Activated CD8-positive, alpha-beta T cell treated with anti-CD3 and anti-CD28 coated beads for 36 hours (primary cell): ENCODE measurements at regions of chr6 and their contacts with region 1.

Region 1: DNA sequence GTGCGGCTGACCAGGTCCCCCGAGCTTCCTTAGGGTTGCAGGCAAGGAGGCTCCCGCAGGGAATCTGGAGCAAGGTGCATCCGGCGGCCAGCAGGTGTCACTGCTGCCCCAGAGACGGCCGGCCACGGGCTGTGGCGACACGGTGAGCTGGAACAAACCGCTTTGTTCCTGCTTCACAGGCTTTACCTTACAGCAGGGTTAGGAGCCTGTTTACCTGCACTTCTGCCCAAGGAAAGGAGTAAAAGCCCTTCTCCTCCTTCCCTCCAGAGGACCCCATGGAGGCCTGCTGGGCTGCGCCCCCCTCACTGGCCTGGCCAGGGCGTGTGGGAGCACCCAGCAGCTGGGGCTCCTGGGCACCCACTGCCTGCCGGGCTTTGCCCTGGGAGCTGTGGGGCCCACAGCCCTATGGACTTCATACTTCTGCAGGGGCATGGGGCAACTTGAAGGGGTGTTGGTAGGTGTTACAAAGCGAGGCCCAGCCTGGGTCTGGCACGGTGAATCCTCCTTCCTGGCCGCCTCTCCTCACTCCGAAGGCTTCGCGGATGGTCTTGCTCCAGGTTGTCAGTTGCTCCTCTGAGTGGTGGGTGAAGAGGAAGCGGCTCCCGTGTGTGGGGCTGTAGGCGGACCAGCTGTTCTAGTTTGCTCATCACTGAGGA is 88.4 kb downstream of the CDC5L start:
- DNase-seq: peak; percentile 77
- ATAC-seq: peak; percentile 92
- H3K4me3 Mint-ChIP-seq: no peak overlapping the region
- H3K27ac Mint-ChIP-seq: no peak overlapping the region
- H3K4me1 Mint-ChIP-seq: no peaks in the 10 kb centered on the region
- H3K27me3 Mint-ChIP-seq: no peaks in the 10 kb centered on the region
- CTCF ChIP-seq: peak; percentile 92

Region 2: DNA sequence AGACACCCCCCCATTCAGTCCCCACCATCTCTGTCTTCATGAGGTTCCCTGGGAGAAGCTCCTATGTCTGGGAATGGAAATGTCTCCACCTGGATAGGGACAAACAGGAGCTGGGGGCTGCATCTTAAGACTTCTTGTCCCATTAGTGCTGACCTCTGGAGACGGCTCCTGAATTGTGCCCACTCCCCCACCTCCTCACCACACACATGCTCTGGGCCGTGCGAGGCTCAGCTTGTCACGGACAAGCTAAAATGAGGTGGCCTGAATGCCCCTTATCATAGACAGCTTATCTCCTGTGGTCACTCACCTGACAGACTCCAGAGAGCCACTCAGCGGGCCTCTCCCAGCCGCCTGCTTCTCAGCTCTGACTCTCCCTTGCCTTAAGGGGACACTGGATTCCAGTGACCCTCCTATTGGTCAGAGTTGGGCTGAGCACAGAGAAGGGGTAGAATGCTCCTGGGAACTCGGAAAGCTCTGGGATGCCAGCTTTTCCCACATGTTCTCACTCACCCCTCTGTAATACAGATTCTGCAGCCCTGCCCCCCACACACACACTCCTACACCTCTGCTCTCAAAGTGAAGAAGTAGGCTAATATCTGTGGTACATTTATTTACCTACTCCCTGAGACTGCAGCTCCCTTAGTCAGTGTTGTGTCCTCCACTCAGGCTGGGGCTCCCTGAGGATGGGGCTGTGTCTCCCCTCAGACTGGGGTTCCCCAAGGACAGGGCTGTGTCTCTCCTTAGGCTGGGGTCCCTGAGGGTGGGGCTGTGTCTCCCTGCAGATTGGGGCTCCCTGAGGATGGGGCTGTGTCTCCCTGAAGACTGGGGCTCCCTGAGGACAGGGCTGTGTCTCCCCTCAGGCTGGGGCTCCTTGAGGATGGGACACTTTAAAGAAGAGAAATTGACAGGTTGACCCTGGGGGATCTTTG is 538.4 kb before region 1 on chr6:
- CTCF ChIA-PET with region 1: no interaction called
- POLR2A ChIA-PET with region 1: no interaction called
- intact Hi-C with region 1: no loop called
- DNase-seq: no peak
- ATAC-seq: no peak
- H3K4me3 Mint-ChIP-seq: no peak overlapping the region
- H3K27ac Mint-ChIP-seq: no peak overlapping the region
- H3K4me1 Mint-ChIP-seq: no peaks in the 10 kb centered on the region
- H3K27me3 Mint-ChIP-seq: no peaks in the 10 kb centered on the region
- CTCF ChIP-seq: no peak

Region 3: DNA sequence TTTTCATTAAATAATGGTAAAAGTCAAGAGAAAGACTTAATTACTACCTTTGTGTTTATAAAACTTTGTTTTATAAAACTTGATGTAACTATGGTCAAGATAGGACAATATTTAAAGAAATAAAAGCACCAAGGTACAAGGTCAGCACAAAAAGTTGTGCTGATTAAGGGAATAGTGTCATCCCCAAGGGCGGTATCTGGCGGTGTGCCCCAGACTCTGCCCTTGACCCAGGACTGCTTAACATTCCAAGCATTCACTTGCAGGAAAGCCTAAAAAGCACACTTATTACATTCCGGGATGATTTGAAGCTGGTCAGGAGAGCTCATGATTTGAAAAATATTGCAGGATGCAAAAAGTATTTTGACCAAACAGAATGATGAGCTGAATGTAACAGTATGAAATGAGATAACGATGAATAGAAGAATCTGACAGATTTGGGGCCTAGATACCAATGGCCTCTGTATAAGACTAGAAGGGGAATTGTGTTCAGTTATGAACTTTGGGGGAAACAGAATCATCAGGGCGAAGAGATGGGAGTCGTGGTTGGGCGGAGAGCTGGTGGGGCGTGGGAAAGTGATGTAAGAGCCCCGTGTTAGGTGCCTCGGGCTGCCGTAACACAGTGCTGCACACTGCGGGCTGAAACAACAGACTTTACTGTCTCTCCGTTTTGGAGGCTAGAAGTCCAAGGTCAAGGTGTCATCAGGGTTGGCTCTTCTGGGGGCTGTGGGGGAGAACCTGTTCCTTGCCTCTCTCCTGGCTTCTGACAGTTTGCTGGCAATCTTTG is 11.2 kb before region 1 on chr6:
- CTCF ChIA-PET with region 1: interaction called, 50 read pairs
- POLR2A ChIA-PET with region 1: no interaction called
- intact Hi-C with region 1: no loop called
- DNase-seq: no peak
- ATAC-seq: no peak
- H3K4me3 Mint-ChIP-seq: no peak overlapping the region
- H3K27ac Mint-ChIP-seq: no peak overlapping the region
- H3K4me1 Mint-ChIP-seq: no peaks in the 10 kb centered on the region
- H3K27me3 Mint-ChIP-seq: peaks cover 3% of the 10 kb centered on the region
- CTCF ChIP-seq: no peak

Region 4: DNA sequence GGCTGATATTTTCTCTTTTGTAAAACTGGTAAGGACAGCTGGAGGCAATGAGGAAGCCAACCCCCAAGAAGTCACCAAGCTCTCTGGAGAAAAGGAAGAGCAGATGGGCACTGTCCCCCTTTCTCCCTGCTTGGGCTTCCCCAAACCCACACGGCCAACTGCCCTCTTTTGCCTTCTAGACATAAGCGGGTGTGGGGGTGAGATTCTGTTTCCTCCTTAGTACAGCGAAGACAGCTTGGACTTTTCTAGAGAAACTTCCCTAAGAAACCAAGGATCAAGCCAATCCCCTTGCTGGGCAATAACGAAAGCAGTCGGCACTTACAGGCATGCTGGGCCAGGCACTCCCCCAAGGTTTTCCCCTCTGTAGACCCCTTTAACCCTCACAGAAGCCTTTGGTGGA is 21.9 kb after region 1 on chr6:
- CTCF ChIA-PET with region 1: interaction called, 11 read pairs
- POLR2A ChIA-PET with region 1: no interaction called
- intact Hi-C with region 1: no loop called
- DNase-seq: no peak
- ATAC-seq: no peak
- H3K4me3 Mint-ChIP-seq: no peak overlapping the region
- H3K27ac Mint-ChIP-seq: no peak overlapping the region
- H3K4me1 Mint-ChIP-seq: no peaks in the 10 kb centered on the region
- H3K27me3 Mint-ChIP-seq: peaks cover 4% of the 10 kb centered on the region
- CTCF ChIP-seq: no peak

Region 5: DNA sequence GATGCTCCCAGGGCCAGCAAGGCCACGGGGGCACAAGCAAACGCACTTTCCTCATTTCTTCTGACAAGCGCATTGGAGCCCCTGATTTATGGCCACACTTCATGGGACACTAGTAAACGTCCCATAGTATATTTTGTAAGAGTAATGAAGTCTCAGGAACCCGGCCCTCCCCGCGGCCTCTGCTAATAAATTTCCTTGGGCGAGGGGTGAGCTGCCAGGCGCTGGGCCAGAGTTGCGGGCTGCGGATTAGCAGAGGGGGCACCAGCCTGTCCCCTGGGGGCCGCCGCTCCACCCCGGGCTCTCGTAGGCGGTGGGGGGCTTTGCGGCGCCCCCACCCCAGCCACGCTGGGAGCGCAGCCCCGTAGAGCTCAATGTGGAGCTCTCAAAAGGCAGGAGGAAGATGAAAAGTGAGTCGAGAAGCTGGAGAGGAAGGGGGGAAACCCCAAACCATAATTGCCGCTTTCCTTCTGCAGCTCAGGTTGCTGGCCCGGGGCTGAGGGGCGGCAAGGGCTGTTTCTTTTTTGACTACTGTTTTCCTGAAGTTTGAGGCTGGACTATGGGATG is 85.2 kb after region 1 on chr6:
- CTCF ChIA-PET with region 1: interaction called, 13 read pairs
- POLR2A ChIA-PET with region 1: no interaction called
- intact Hi-C with region 1: loop called (anchors 10 kb)
- DNase-seq: peak; percentile 26
- ATAC-seq: no peak
- H3K4me3 Mint-ChIP-seq: no peak overlapping the region
- H3K27ac Mint-ChIP-seq: no peak overlapping the region
- H3K4me1 Mint-ChIP-seq: peaks cover 14% of the 10 kb centered on the region
- H3K27me3 Mint-ChIP-seq: peaks cover 24% of the 10 kb centered on the region
- CTCF ChIP-seq: no peak

Region 6: GRCh38 chr6:44593539-44593944 is 117.6 kb after region 1 on chr6:
- CTCF ChIA-PET with region 1: interaction called, 22 read pairs
- POLR2A ChIA-PET with region 1: no interaction called
- intact Hi-C with region 1: no loop called
- DNase-seq: peak; percentile 89
- ATAC-seq: peak; percentile 90
- H3K4me3 Mint-ChIP-seq: no peak overlapping the region
- H3K27ac Mint-ChIP-seq: no peak overlapping the region
- H3K4me1 Mint-ChIP-seq: peaks cover 3% of the 10 kb centered on the region
- H3K27me3 Mint-ChIP-seq: peaks cover 4% of the 10 kb centered on the region
- CTCF ChIP-seq: peak; percentile 85

Region 7: GRCh38 chr6:44655412-44656342 is 179.8 kb after region 1 on chr6:
- CTCF ChIA-PET with region 1: interaction called, 27 read pairs
- POLR2A ChIA-PET with region 1: no interaction called
- intact Hi-C with region 1: no loop called
- DNase-seq: peak; percentile 84
- ATAC-seq: peak; percentile 94
- H3K4me3 Mint-ChIP-seq: no peak overlapping the region
- H3K27ac Mint-ChIP-seq: peak overlapping the region; percentile 67
- H3K4me1 Mint-ChIP-seq: peaks cover 7% of the 10 kb centered on the region
- H3K27me3 Mint-ChIP-seq: peaks cover 3% of the 10 kb centered on the region
- CTCF ChIP-seq: peak; percentile 95